MCF 10A (cell line): ENCODE measurements at regions of chr20 and their contacts with region 1.

Region 1: DNA sequence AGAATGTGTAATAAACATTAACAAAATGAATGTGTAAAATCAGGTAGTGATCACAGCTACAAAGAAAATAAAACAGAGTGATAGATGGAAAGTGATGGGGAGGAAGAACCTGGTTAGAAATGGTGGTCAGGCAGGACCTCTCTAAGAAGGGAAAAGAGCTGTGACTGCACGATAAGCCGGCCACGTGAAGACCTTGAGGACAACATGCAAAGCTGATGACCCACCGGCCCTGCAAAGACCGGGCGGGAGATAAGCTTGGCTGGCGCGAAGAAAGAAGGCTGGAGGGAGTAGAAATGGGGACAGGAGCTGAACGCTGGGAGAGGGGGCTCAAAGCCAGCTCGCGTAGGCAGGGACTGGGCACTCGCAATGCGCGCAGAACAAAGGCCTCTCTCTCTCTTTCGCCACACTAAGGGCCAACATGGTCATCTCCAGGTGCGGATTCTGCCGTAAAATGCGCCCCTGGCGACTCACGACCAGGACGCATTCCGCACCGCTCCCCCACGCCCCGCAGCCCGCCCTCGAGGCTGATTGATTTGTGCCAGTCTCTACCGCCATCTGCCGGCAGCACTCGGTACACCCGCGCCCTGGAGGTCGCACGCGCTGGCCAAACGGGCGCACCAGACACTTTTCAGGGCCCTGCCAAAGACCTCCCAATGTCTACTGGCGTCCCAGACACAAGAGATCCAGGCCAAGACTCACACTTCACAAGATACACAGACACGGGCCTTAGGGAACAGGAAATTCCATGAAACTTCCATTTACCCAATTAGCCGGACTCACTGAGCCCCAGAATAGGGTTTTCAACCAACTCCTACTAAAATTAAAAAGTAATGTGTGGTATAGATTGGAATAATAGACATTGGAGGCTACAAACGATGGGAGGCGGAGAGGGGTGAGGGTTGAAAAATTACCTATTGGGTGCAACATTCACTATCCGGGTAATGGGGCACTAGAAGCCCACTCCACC is 9.4 kb downstream of the DEFB132 start:
- DNase-seq: peak; percentile 64
- H3K4me3 Mint-ChIP-seq: peak overlapping the region; percentile 61
- H3K27ac Mint-ChIP-seq: no peak overlapping the region
- H3K4me1 Mint-ChIP-seq: peaks cover 12% of the 10 kb centered on the region
- H3K27me3 Mint-ChIP-seq: no peaks in the 10 kb centered on the region
- CTCF ChIP-seq: peak; percentile 96

Region 2: GRCh38 chr20:219290-220115 is 47.4 kb before region 1 on chr20:
- CTCF ChIA-PET with region 1: interaction called, 19 read pairs
- POLR2A ChIA-PET with region 1: interaction called, 4 read pairs
- intact Hi-C with region 1: no loop called
- DNase-seq: peak; percentile 38
- H3K4me3 Mint-ChIP-seq: no peak overlapping the region
- H3K27ac Mint-ChIP-seq: no peak overlapping the region
- H3K4me1 Mint-ChIP-seq: no peaks in the 10 kb centered on the region
- H3K27me3 Mint-ChIP-seq: peaks cover 54% of the 10 kb centered on the region
- CTCF ChIP-seq: peak; percentile 60

Region 3: DNA sequence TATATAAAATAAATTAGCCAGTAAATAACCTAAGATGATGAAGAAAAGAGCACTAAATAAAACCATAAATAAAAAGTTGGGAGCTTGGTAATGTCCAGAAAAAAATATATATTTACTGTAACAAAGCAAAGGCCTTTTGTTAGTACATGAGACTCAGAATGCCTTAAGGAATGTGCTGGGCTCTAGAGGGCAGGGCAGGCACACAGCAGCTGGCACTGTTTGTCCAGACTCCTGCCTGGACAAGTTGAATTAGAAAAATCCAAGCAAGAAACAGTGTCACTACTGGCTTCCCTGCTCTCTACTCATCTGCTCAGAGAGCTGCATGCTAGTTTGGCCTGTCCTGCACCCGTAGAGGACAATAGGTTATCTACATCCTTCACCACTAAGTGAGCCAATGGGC is 31.0 kb before region 1 on chr20:
- CTCF ChIA-PET with region 1: interaction called, 281 read pairs
- POLR2A ChIA-PET with region 1: interaction called, 12 read pairs
- intact Hi-C with region 1: loop called (anchors 1 kb)
- DNase-seq: peak; percentile 47
- H3K4me3 Mint-ChIP-seq: no peak overlapping the region
- H3K27ac Mint-ChIP-seq: peak overlapping the region; percentile 39
- H3K4me1 Mint-ChIP-seq: peaks cover 5% of the 10 kb centered on the region
- H3K27me3 Mint-ChIP-seq: peaks cover 25% of the 10 kb centered on the region
- CTCF ChIP-seq: peak; percentile 25

Region 4: GRCh38 chr20:278607-279571 is 12.0 kb after region 1 on chr20:
- CTCF ChIA-PET with region 1: interaction called, 13 read pairs
- POLR2A ChIA-PET with region 1: no interaction called
- intact Hi-C with region 1: no loop called
- DNase-seq: no peak
- H3K4me3 Mint-ChIP-seq: no peak overlapping the region
- H3K27ac Mint-ChIP-seq: no peak overlapping the region
- H3K4me1 Mint-ChIP-seq: no peaks in the 10 kb centered on the region
- H3K27me3 Mint-ChIP-seq: no peaks in the 10 kb centered on the region
- CTCF ChIP-seq: no peak